HAP-1 (cell line): ENCODE measurements at regions of chr9 and their contacts with region 1.

Region 1: GRCh38 chr9:130107234-130107861 is 53.6 kb downstream of the GPR107 start:
- DNase-seq: peak; percentile 60 to 88
- H3K4me3 ChIP-seq: no peak overlapping the region
- H3K4me1 ChIP-seq: no peaks in the 10 kb centered on the region
- H3K27me3 ChIP-seq: no peaks in the 10 kb centered on the region

Region 2: GRCh38 chr9:130343445-130343918 is 236.1 kb after region 1 on chr9:
- in situ Hi-C with region 1: loop called (anchors 25 kb)
- DNase-seq: peak in 1 of 2 experiments; percentile 74
- H3K4me3 ChIP-seq: no peak overlapping the region
- H3K4me1 ChIP-seq: no peaks in the 10 kb centered on the region
- H3K27me3 ChIP-seq: no peaks in the 10 kb centered on the region